MCF 10A (cell line): ENCODE measurements at regions of chr16 and their contacts with region 1.

Region 1: DNA sequence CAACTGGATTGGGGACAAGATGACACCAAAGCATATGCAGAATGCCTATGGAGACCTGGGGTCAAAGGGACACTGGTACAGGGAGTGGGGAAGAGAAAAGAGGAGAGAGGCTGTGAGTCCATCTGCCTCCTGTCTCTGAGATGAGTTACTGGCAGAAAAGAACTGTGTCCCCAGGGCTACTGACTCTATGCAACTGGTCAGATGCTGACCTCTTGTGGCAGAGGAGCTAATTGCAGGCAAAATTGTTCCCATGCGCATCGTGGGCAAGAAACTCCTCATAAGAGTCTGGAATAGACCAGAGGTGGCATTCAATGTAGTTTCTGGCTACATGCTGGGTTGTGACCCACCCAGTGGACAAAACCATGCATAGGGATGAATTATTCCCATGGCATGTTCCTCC is 26.1 kb upstream of the MLKL start:
- DNase-seq: peak; percentile 51
- H3K4me3 Mint-ChIP-seq: no peak overlapping the region
- H3K27ac Mint-ChIP-seq: no peak overlapping the region
- H3K4me1 Mint-ChIP-seq: peaks cover 12% of the 10 kb centered on the region
- H3K27me3 Mint-ChIP-seq: no peaks in the 10 kb centered on the region
- CTCF ChIP-seq: peak; percentile 54

Region 2: DNA sequence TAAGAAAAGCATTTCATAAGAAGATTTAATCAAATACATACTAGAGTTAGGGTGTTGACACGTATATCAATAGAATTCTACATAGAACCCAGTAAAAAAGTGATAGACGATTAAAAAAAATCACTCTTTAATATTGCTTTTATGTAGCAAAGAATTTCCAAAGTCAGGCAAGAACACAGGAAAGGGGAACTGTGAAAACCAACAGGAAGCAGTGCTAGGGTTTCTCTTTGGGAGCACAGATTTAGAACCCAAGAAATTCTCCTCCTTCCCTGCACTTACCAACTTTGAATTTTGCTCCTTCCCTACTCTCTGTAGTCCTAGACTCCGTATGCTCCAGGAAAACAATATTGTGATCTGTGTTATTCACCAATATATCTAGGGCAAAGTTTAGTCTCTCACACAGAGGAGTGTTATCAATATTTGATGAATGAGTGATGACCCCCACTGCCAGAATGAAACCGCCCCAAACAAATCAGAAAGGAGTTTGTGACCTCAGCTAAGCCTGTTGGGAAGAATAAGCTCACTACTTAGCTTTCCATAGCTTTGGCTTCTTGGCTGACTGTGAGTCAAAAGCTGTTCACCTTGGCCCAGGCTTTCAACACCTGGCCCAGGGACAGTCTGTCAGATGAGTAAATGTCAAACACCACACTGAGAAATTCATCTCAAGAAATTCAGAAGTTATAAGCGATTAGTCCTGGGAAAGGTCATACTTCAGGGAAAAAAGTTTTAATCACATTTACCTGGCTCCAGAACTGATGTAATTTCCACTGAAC is 68.7 kb before region 1 on chr16:
- CTCF ChIA-PET with region 1: no interaction called
- POLR2A ChIA-PET with region 1: no interaction called
- intact Hi-C with region 1: no loop called
- DNase-seq: no peak
- H3K4me3 Mint-ChIP-seq: no peak overlapping the region
- H3K27ac Mint-ChIP-seq: no peak overlapping the region
- H3K4me1 Mint-ChIP-seq: peaks cover 13% of the 10 kb centered on the region
- H3K27me3 Mint-ChIP-seq: no peaks in the 10 kb centered on the region
- CTCF ChIP-seq: no peak

Region 3: DNA sequence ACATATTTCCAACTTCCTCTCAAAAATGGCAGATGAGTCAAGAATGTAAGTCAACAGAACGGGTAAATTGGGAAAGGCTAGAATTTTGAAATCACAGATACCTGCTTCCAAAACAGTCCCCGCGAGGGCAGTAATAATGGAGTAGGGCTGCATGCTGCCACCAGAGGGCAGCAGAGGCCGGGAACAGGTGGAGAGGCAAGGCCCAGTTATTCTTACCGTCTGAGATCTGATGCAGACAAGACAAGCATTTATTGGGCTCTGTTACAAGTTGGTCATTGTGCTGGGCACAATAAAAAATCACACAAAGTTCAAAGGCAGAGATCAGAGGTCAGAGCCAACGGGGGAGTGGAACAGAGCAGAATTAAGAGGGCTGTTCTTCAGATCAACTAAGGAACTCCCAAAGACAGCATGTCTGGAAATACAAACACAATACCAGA is 17.3 kb before region 1 on chr16:
- CTCF ChIA-PET with region 1: interaction called, 58 read pairs
- POLR2A ChIA-PET with region 1: no interaction called
- intact Hi-C with region 1: no loop called
- DNase-seq: peak; percentile 91
- H3K4me3 Mint-ChIP-seq: no peak overlapping the region
- H3K27ac Mint-ChIP-seq: no peak overlapping the region
- H3K4me1 Mint-ChIP-seq: no peaks in the 10 kb centered on the region
- H3K27me3 Mint-ChIP-seq: no peaks in the 10 kb centered on the region
- CTCF ChIP-seq: peak; percentile 93

Region 4: GRCh38 chr16:74740795-74741304 is 14.1 kb after region 1 on chr16:
- CTCF ChIA-PET with region 1: interaction called, 12 read pairs
- POLR2A ChIA-PET with region 1: interaction called, 4 read pairs
- intact Hi-C with region 1: no loop called
- DNase-seq: peak; percentile 84
- H3K4me3 Mint-ChIP-seq: peak overlapping the region; percentile 36
- H3K27ac Mint-ChIP-seq: peak overlapping the region; percentile 55
- H3K4me1 Mint-ChIP-seq: peaks cover 48% of the 10 kb centered on the region
- H3K27me3 Mint-ChIP-seq: no peaks in the 10 kb centered on the region
- CTCF ChIP-seq: no peak

Region 5: GRCh38 chr16:74852500-74852875 is 125.8 kb after region 1 on chr16:
- CTCF ChIA-PET with region 1: no interaction called
- POLR2A ChIA-PET with region 1: no interaction called
- intact Hi-C with region 1: no loop called
- DNase-seq: no peak
- H3K4me3 Mint-ChIP-seq: no peak overlapping the region
- H3K27ac Mint-ChIP-seq: no peak overlapping the region
- H3K4me1 Mint-ChIP-seq: no peaks in the 10 kb centered on the region
- H3K27me3 Mint-ChIP-seq: no peaks in the 10 kb centered on the region
- CTCF ChIP-seq: no peak

Region 6: GRCh38 chr16:75860326-75861053 is 1133.8 kb after region 1 on chr16:
- CTCF ChIA-PET with region 1: no interaction called
- POLR2A ChIA-PET with region 1: no interaction called
- intact Hi-C with region 1: no loop called
- DNase-seq: no peak
- H3K4me3 Mint-ChIP-seq: no peak overlapping the region
- H3K27ac Mint-ChIP-seq: no peak overlapping the region
- H3K4me1 Mint-ChIP-seq: no peaks in the 10 kb centered on the region
- H3K27me3 Mint-ChIP-seq: no peaks in the 10 kb centered on the region
- CTCF ChIP-seq: no peak